Ascending aorta (tissue), 2 donors: ENCODE measurements at regions of chr12 and their contacts with region 1.

Region 1: DNA sequence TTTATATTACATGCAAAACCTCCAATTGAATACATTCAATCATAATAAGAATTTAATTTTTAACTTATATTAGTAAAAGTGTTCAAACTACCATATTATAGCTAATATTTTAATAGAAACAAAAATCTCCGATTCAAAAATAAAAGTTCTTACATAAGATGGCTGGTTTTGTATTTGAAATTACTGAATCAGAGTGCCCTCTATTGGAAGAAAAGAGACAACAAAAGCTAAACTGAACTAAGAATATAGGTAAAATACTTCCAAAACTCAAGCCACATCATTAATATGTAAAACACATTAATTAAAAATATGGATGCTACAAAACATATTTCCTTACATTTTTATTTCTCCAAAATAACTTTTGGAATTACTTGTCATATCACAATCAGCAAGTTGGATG is 120.3 kb downstream of the GARIN6 start:
- DNase-seq: no peak
- H3K4me3 ChIP-seq: peak overlapping the region; percentile 34
- H3K27ac ChIP-seq: no peak overlapping the region
- H3K4me1 ChIP-seq: peaks cover 0 to 17% of the 10 kb centered on the region in 2 donors
- H3K27me3 ChIP-seq: no peaks in the 10 kb centered on the region
- CTCF ChIP-seq: peak in 2 of 3 experiments; percentile 56 to 70

Region 2: DNA sequence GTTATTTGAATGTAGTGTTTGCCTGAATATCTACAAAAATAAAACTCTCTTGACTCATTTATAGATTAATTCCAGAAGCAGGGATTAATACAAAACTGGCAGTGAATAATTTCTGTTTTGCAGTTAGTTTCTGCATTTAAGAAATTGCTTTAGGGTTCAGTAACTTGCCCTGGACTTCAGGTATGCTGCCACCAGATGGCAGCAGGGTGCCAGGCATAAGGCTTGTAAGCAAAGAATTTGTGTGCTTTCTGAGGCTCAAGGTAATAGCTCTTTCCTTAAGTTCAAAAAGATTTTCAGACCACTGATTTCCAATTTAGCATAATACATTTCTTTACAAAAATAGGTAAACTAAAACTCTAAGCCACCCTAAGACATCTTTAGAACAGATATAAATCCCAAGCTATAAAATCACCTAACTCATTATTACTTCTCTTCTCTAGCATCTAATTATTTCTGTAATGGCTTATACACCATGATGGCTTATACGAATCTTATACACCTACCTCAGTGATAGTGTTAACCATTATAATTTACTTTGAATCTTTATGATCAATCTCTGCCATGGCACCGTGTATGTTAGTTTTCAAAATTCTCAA is 724.4 kb before region 1 on chr12:
- intact Hi-C with region 1: loop called (anchors 2 kb)
- DNase-seq: peak in 1 of 2 donors; percentile 76
- H3K4me3 ChIP-seq: no peak overlapping the region
- H3K27ac ChIP-seq: no peak overlapping the region
- H3K4me1 ChIP-seq: no peaks in the 10 kb centered on the region
- H3K27me3 ChIP-seq: no peaks in the 10 kb centered on the region
- CTCF ChIP-seq: peak; percentile 62 to 84 (median 68)

Region 3: GRCh38 chr12:99059824-99060511 is 707.8 kb before region 1 on chr12:
- intact Hi-C with region 1: loop called (anchors 5 kb)
- DNase-seq: peak; percentile 10 to 67
- H3K4me3 ChIP-seq: no peak overlapping the region
- H3K27ac ChIP-seq: no peak overlapping the region
- H3K4me1 ChIP-seq: no peaks in the 10 kb centered on the region
- H3K27me3 ChIP-seq: no peaks in the 10 kb centered on the region
- CTCF ChIP-seq: peak in 1 of 3 experiments; percentile 25

Region 4: GRCh38 chr12:99386907-99387306 is 380.9 kb before region 1 on chr12:
- intact Hi-C with region 1: loop called (anchors 5 kb)
- DNase-seq: no peak
- H3K4me3 ChIP-seq: no peak overlapping the region
- H3K27ac ChIP-seq: peak overlapping the region; percentile 58 to 72
- H3K4me1 ChIP-seq: peaks cover 0 to 7% of the 10 kb centered on the region in 2 donors
- H3K27me3 ChIP-seq: no peaks in the 10 kb centered on the region
- CTCF ChIP-seq: peak in 2 of 3 experiments; percentile 6 to 24

Region 5: DNA sequence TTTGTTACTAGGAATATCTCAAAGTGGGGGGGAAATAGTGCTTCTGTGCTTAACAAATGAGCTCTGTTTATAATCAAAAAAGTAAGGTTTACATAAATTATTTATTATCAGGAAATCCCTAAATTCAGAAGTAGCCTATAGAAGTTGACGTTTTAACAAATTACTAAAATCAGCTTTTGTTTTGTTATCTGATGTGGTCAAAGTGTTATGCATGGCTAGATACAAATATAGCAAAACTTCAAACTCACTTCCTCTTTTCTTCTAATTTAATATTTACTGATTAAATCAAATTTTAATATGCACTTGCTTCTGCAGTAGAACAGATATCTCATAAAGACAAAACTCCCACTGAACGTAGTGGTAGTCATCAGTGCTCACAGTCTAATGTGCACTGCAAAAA is 72.8 kb before region 1 on chr12:
- intact Hi-C with region 1: no loop called
- DNase-seq: no peak
- H3K4me3 ChIP-seq: no peak overlapping the region
- H3K27ac ChIP-seq: no peak overlapping the region
- H3K4me1 ChIP-seq: no peaks in the 10 kb centered on the region
- H3K27me3 ChIP-seq: no peaks in the 10 kb centered on the region
- CTCF ChIP-seq: no peak